ENCODE measurements at regions of chr6 and their contacts with region 1.

Region 1: DNA sequence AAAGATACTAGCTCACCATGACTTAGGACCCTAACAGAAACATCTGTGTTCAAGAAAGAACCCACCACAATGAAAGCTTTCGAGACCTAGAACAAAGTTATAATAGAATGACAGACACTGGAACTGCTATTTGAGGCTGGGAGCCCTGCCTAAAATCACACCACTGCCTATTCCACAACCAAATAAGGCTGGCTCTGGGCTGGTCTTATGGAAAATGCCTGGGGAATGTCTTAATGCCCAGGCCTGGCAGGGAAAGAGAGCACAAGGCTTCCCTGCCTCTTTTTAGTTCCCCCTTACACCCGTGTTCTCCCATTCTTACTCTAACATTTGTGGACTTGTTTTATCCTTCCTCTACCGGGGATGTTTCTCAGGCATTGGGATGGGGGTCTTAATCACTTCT is 5.6 kb upstream of the METTL24 start:
- DNase-seq: peak in 1 of 2 donors; percentile 19
- ATAC-seq: peak; percentile 33 to 93 (median 68)
- H3K4me3 ChIP-seq: no peak overlapping the region
- H3K27ac ChIP-seq: peak overlapping the region in 2 of 10 donors; percentile 26 to 44
- H3K4me1 ChIP-seq: peaks cover 0 to 9% (median 0%) of the 10 kb centered on the region in 9 donors
- H3K27me3 ChIP-seq: peaks cover 0 to 33% (median 10%) of the 10 kb centered on the region in 7 donors
- CTCF ChIP-seq: no peak

Region 2: DNA sequence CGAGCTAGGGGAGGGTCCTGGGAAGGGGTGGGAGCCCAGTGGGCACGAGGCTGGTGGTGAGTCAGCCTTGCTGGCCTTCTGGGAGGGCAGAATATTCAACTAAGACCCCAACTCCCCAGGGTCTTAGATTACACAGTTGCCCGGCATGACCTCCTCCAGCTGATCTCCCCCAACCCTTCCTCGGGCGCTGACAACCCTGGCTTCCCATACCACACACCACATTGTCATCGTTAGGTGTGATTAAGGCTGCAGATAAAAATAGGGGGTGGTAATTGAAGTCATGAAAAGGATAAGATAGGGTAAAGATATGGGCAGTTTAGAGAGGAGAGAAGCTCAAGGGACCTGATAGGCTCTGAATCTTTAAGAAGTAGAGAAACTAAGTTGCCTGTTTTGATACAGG is 173.0 kb before region 1 on chr6:
- intact Hi-C with region 1: loop called in 1 of 10 experiments (anchors 1 kb)
- DNase-seq: no peak
- ATAC-seq: no peak
- H3K4me3 ChIP-seq: no peak overlapping the region
- H3K27ac ChIP-seq: no peak overlapping the region
- H3K4me1 ChIP-seq: peaks cover 0 to 49% (median 25%) of the 10 kb centered on the region in 9 donors
- H3K27me3 ChIP-seq: no peaks in the 10 kb centered on the region
- CTCF ChIP-seq: no peak

Region 3: GRCh38 chr6:110456694-110457093 is 92.9 kb after region 1 on chr6:
- intact Hi-C with region 1: no loop called
- DNase-seq: no peak
- ATAC-seq: no peak
- H3K4me3 ChIP-seq: no peak overlapping the region
- H3K27ac ChIP-seq: no peak overlapping the region
- H3K4me1 ChIP-seq: no peaks in the 10 kb centered on the region
- H3K27me3 ChIP-seq: no peaks in the 10 kb centered on the region
- CTCF ChIP-seq: no peak

Measured in heart right ventricle (tissue), 16 donors.